Common myeloid progenitor, CD34-positive (primary cell): ENCODE measurements at regions of chr13 and their contacts with region 1.

Region 1: GRCh38 chr13:44470638-44471562 is 97.3 kb downstream of the SERP2 start:
- DNase-seq: peak; percentile 60 to 71 (median 60)
- H3K4me3 ChIP-seq: no peak overlapping the region
- H3K27ac ChIP-seq: no peak overlapping the region
- H3K4me1 ChIP-seq: peaks cover 0 to 5% (median 3%) of the 10 kb centered on the region in 4 experiments
- H3K27me3 ChIP-seq: no peaks in the 10 kb centered on the region

Region 2: GRCh38 chr13:43905435-43906031 is 565.4 kb before region 1 on chr13:
- CTCF ChIA-PET with region 1: interaction called, 244 read pairs
- POLR2A ChIA-PET with region 1: no interaction called
- DNase-seq: peak; percentile 65 to 81 (median 78)
- H3K4me3 ChIP-seq: no peak overlapping the region
- H3K27ac ChIP-seq: no peak overlapping the region
- H3K4me1 ChIP-seq: no peaks in the 10 kb centered on the region
- H3K27me3 ChIP-seq: no peaks in the 10 kb centered on the region

Region 3: DNA sequence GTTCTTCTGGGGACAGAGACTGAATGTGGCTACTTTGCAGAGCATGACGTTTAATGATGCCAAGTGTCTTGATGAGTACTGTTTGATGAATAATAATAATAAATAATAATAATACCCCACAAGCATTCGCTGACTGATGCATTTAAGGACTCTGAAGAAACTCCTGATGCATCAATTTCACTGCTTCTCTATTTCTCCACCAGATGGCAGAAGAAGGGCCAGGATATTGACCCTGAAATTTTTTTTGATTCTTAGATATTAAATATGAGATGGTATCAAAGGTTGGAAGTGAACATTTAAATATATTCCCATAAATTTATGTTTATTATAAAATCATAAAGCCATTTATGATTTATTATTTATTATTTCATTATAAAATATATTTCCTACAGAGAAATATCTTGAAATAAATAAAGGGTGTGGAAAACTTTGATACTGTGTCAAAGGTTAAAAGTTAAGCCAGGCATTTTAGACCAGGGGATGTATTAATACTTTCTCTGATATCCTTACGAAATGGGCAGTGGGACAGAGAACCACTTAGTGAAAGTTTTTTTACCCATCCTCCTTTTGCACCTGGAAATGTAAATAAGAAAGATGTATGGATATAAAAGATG is 420.3 kb before region 1 on chr13:
- CTCF ChIA-PET with region 1: interaction called, 13 read pairs
- POLR2A ChIA-PET with region 1: no interaction called
- DNase-seq: peak; percentile 52 to 66 (median 58)
- H3K4me3 ChIP-seq: no peak overlapping the region
- H3K27ac ChIP-seq: no peak overlapping the region
- H3K4me1 ChIP-seq: peaks cover 0 to 24% (median 3%) of the 10 kb centered on the region in 4 experiments
- H3K27me3 ChIP-seq: no peaks in the 10 kb centered on the region

Region 4: DNA sequence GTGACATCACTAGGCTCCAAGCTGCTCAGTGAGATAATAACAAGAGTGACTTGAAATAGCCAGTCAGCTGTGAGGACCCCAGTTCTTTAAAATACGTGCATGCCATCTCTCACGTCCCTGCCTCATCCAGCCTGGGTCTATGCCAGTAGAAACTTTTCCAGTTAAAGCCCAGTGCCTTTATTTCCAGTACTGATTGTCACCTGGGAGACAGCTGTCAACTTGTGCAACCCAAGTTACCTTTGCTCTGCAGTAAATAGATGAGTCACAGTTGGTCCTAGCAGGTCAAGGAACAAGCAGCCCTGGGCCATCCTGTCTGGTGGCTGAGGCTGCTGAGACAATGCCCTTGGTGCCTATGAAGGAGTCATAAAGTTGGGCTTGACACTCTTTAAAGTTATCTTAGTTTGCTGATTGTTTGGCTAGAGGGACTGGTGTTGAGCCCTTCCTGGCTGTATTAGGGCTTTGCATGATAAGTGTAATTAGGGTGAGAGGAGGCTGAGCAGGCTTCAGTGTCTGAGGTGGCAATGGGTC is 362.5 kb before region 1 on chr13:
- CTCF ChIA-PET with region 1: no interaction called
- POLR2A ChIA-PET with region 1: no interaction called
- DNase-seq: peak in 1 of 3 donors; percentile 56
- H3K4me3 ChIP-seq: no peak overlapping the region
- H3K27ac ChIP-seq: no peak overlapping the region
- H3K4me1 ChIP-seq: no peaks in the 10 kb centered on the region
- H3K27me3 ChIP-seq: no peaks in the 10 kb centered on the region

Region 5: GRCh38 chr13:44484562-44485138 is 13.8 kb after region 1 on chr13:
- CTCF ChIA-PET with region 1: interaction called, 13 read pairs
- POLR2A ChIA-PET with region 1: no interaction called
- DNase-seq: peak; percentile 25 to 51 (median 50)
- H3K4me3 ChIP-seq: peak overlapping the region in 4 of 7 experiments; percentile 37 to 79 (median 64)
- H3K27ac ChIP-seq: peak overlapping the region; percentile 67 to 82
- H3K4me1 ChIP-seq: peaks cover 0 to 26% (median 13%) of the 10 kb centered on the region in 4 experiments
- H3K27me3 ChIP-seq: no peaks in the 10 kb centered on the region

Region 6: DNA sequence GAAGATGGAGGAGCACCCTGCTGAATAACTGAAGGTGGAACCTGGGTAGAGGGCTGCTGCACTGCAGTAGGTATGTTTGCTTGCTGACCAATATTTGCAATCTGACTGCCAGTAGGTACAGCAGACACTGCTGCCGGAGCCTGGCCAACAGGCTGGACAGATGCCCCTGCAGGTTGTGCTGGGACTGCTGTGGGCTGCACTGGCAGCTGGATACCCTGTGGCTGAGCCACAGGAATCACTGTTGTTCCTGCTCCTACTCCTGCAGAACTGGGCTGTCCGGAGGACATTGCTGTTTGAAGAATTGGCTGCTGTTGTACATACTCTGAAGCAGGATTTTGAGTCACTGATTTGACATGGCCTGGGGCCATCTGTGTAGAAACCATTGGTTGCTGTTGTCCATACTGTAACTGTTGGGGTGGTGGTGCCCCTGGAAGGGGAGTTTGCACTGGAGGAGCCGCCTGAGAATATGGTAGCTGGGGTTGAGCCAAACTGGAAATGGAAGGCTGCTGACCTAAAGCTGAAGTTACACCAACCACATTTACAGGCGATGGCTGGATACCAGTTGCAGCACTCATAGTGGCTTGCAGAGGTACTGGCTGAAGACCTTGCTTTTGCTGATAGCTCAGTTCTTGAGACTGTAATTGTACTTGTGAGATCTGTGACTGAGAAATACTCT is 103.0 kb after region 1 on chr13:
- CTCF ChIA-PET with region 1: no interaction called
- POLR2A ChIA-PET with region 1: no interaction called
- DNase-seq: peak; percentile 29 to 56 (median 51)
- H3K4me3 ChIP-seq: peak overlapping the region in 1 of 7 experiments; percentile 94
- H3K27ac ChIP-seq: no peak overlapping the region
- H3K4me1 ChIP-seq: peaks cover 19 to 50% (median 45%) of the 10 kb centered on the region in 4 experiments
- H3K27me3 ChIP-seq: no peaks in the 10 kb centered on the region